ENCODE measurements at regions of chr12 and their contacts with region 1.

Region 1: DNA sequence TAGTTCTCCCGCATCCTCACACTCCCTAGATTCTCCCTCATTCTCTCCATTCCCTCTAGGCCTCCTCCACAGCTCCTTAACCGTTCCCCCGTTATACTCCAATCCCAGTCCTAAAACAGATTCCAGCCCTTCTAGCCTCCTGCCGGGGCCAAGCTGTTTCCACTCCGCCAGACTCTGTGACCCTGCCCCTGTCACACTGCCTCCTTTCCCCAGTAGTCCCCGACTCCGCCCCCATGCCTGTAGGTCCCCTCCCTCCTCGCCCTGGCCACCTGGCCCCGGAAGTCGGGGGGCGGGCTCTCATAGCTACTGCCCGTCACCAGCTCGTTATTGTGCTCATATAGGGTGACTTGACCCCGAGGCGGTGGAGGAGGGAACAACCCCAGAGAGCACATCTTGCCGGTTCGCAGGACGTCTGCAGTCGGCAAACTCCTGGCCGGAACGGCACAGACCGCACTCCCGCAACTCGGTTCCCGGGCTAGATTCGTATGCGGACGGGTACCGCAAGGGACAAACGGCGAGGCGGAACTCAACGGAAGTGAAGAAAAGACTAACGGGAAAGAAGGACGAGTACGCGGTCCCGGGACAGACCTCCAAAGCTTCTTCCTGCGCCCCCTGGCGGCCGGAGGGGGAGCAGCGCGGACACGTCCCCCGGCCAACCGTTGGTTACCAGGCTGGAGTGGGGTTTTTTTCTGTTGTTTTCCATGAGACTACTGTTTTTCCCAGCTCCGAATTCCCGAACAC is at the start of gene AAAS:
- DNase-seq: peak; percentile 98
- ATAC-seq: peak; percentile 87
- H3K4me3 Mint-ChIP-seq: peak within 1 kb of the TSS; percentile 92
- H3K27ac Mint-ChIP-seq: peak within 1 kb of the TSS; percentile 96
- H3K4me1 Mint-ChIP-seq: peaks cover 47% of the 10 kb centered on the region
- H3K27me3 Mint-ChIP-seq: no peaks in the 10 kb centered on the region
- total RNA-seq, gene AAAS: 67.5 to 67.9 TPM

Region 2: DNA sequence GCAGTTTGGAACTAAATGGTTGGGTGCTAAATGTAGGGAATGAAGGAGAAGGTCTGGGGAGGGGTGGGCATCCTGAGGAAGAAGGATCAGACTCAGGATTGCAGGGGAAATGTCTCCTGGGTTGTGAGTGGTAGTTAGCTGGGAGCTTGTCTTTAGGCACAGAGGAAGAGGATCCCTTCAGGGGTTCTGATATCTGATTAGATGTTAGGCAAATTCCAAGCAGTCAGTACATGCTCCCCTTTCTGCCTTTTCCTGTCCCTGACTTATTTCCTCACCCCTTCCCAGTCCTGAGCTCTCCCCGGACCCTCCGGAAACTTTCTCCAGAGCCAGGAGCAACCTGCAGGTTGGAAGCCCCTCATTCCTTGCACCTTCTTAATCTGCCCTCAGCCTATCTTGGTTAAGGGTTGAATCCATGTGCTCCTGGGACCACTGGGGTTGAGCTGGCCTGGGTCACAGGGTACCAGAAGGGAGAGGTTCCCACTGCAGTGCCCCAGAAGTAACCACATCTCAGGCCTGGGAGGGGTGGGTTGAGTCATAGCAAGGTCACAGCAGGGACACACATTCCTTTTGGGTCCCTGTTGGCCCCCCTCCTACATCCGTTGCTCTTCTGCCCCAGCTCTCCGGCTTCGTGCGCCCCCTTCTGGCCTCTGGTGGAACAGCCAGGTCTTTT is 222.1 kb before region 1 on chr12:
- CTCF ChIA-PET with region 1: interaction called, 20 read pairs
- POLR2A ChIA-PET with region 1: interaction called, 4 read pairs
- DNase-seq: peak; percentile 94
- ATAC-seq: peak; percentile 25
- H3K4me3 Mint-ChIP-seq: peak overlapping the region; percentile 17
- H3K27ac Mint-ChIP-seq: peak overlapping the region; percentile 91
- H3K4me1 Mint-ChIP-seq: peaks cover 68% of the 10 kb centered on the region
- H3K27me3 Mint-ChIP-seq: peaks cover 8% of the 10 kb centered on the region

Region 3: GRCh38 chr12:53205747-53206419 is 115.4 kb before region 1 on chr12:
- CTCF ChIA-PET with region 1: interaction called, 88 read pairs
- POLR2A ChIA-PET with region 1: interaction called, 3 read pairs
- DNase-seq: peak; percentile 90
- ATAC-seq: peak; percentile 71
- H3K4me3 Mint-ChIP-seq: peak overlapping the region; percentile 83
- H3K27ac Mint-ChIP-seq: peak overlapping the region; percentile 86
- H3K4me1 Mint-ChIP-seq: peaks cover 80% of the 10 kb centered on the region
- H3K27me3 Mint-ChIP-seq: no peaks in the 10 kb centered on the region

Region 4: DNA sequence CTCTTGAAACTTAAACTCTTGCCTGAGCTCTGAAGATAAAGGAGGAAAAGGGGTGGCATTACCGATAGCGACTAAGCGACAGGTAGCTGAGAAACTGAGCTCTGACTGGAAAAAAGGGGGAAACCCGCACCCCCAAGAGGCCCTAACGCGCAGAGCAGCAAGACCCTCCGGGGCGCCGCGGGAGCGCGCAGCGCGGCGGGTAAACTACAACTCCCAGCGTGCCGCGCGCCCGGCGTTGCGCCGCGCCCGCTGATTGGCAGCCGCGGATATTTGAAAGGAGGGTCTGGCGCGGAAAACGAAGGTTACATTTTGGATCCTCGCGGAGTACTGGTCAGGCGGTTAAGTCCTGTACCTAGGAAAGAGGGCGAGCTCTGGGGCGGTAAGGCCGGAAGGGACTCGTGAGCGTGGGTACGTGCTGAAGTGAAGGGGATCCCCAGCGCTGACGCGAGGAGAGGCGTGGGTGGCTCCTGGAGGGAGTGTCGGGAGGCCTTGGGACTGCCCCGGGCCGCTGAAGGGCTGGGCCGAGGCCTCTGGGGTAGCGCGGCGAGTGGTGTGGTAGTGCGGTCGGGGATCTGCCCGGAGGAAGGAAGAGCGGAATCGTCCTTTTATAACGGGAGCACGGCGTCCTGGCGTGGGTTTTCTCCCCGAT is 53.1 kb before region 1 on chr12 and contains the start of gene ESPL1:
- CTCF ChIA-PET with region 1: interaction called, 58 read pairs
- POLR2A ChIA-PET with region 1: interaction called, 4 read pairs
- DNase-seq: peak; percentile 93
- ATAC-seq: peak; percentile 95
- H3K4me3 Mint-ChIP-seq: peak within 1 kb of the TSS; percentile 98
- H3K27ac Mint-ChIP-seq: peak within 1 kb of the TSS; percentile 98
- H3K4me1 Mint-ChIP-seq: peaks cover 47% of the 10 kb centered on the region
- H3K27me3 Mint-ChIP-seq: no peaks in the 10 kb centered on the region
- total RNA-seq, gene ESPL1: 126 TPM

Region 5: GRCh38 chr12:53344824-53345485 is 23.7 kb after region 1 on chr12:
- CTCF ChIA-PET with region 1: interaction called, 290 read pairs
- POLR2A ChIA-PET with region 1: interaction called, 38 read pairs
- DNase-seq: peak; percentile 78
- ATAC-seq: peak; percentile 85
- H3K4me3 Mint-ChIP-seq: peak overlapping the region; percentile 92
- H3K27ac Mint-ChIP-seq: peak overlapping the region; percentile 91
- H3K4me1 Mint-ChIP-seq: peaks cover 17% of the 10 kb centered on the region
- H3K27me3 Mint-ChIP-seq: peaks cover 9% of the 10 kb centered on the region

Region 6: DNA sequence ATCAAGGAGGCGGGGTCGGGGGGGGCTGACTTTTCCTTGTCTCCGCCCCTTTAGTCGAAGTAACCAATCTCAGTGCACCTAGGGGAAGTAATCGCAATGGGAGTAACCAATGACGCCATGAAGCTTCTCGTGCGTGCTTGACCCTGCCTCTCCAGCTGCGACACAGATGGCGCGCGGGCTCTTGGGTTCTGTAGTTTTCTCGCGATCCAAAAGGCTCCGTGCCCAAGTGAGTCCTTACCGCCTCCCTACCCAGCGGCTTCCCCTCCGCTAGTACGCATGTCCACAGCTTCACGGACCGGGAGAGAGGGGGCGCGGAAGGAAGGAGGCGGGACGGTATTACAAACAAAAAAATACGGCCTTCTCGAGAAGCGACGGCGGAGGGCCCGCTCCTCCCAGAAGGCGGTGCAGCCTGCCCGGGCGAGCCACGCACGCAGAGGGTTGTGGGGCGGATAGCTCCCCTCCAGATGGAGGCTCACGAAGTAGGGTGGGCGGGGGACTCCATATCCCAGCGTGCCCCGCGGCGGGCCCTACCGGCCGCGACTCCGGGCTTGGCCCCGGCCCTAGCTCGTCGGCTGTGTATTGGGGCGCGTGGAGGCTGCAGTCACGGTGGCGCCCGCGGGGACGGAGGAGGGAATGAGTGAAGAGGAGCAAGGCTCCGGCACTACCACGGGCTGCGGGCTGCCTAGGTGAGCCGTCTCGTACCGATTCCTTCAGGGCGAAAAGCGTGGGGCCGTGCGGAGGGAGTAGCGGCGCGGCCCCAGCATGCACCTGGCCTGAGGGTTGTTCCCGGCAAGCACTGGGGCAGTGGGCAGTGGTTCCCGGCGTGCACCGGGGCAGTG is 179.8 kb after region 1 on chr12 and contains the start of gene TARBP2:
- CTCF ChIA-PET with region 1: interaction called, 17 read pairs
- POLR2A ChIA-PET with region 1: interaction called, 5 read pairs
- DNase-seq: peak; percentile 97
- ATAC-seq: peak; percentile 84
- H3K4me3 Mint-ChIP-seq: peak within 1 kb of the TSS; percentile 81
- H3K27ac Mint-ChIP-seq: peak within 1 kb of the TSS; percentile 94
- H3K4me1 Mint-ChIP-seq: peaks cover 43% of the 10 kb centered on the region
- H3K27me3 Mint-ChIP-seq: no peaks in the 10 kb centered on the region
- total RNA-seq, gene TARBP2: 30.3 to 36.9 TPM

Region 7: DNA sequence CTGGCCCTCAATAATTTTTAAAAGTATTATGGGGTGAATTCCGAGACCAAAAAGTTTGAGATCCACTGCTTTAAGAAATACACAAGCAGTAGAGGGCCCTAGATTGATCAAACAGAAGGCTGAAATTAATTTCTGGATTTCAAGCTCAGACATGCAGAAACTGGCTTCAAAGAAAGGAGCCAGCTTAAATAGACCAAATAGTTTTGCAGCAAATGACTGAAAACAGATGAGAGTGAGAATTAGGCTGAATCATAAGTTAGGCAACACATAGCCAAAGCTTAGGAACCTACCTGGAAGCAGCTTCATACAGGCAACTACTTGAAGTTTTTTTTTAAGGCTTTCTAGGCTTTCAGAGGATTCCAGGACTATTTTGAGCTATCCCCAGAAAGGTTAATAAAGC is 292.6 kb after region 1 on chr12:
- CTCF ChIA-PET with region 1: no interaction called
- POLR2A ChIA-PET with region 1: no interaction called
- DNase-seq: no peak
- ATAC-seq: no peak
- H3K4me3 Mint-ChIP-seq: no peak overlapping the region
- H3K27ac Mint-ChIP-seq: no peak overlapping the region
- H3K4me1 Mint-ChIP-seq: peaks cover 31% of the 10 kb centered on the region
- H3K27me3 Mint-ChIP-seq: no peaks in the 10 kb centered on the region

Measured in activated CD8-positive, alpha-beta T cell treated with anti-CD3 and anti-CD28 coated beads, Interleukin-2, amount 10 ng/mL, durations not matched to agents 7 days and 5 days (primary cell).